Gastrocnemius medialis (tissue), 4 donors: ENCODE measurements at regions of chr7 and their contacts with region 1.

Region 1: GRCh38 chr7:105336009-105336408 is 52.7 kb downstream of the SRPK2 start:
- DNase-seq: no peak
- ATAC-seq: no peak
- H3K4me3 ChIP-seq: no peak overlapping the region
- H3K27ac ChIP-seq: no peak overlapping the region
- H3K4me1 ChIP-seq: peaks cover 0 to 10% of the 10 kb centered on the region in 2 donors
- H3K27me3 ChIP-seq: no peaks in the 10 kb centered on the region
- CTCF ChIP-seq: peak in 3 of 5 experiments; percentile 23 to 47 (median 25)
- POLR2A ChIP-seq: no peak

Region 2: GRCh38 chr7:105131033-105131656 is 204.9 kb before region 1 on chr7:
- in situ Hi-C with region 1: no loop called
- intact Hi-C with region 1: loop called (anchors 5 kb)
- DNase-seq: no peak
- ATAC-seq: no peak
- H3K4me3 ChIP-seq: no peak overlapping the region
- H3K27ac ChIP-seq: no peak overlapping the region
- H3K4me1 ChIP-seq: peaks cover 13% of the 10 kb centered on the region in 2 donors
- H3K27me3 ChIP-seq: no peaks in the 10 kb centered on the region
- CTCF ChIP-seq: no peak
- POLR2A ChIP-seq: no peak

Region 3: DNA sequence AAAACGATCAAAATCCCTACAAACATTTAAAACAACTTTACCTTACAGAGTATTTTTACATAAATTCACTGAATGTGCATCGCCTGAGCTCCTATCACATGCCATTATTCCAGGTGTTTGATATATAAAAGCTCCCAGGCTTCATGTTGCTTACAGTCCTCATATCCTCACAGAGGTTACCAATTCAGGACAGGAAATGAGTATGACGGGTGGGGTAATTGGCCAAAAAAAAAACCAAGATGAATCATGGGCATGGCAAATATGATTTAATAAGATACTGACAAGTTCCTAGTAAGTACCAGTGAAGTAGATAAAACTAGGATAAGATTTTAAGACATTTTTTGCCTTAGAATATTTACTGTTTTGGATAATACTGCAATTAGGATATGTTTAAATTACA is 186.2 kb before region 1 on chr7:
- in situ Hi-C with region 1: no loop called
- intact Hi-C with region 1: loop called (anchors 10 kb)
- DNase-seq: no peak
- ATAC-seq: no peak
- H3K4me3 ChIP-seq: no peak overlapping the region
- H3K27ac ChIP-seq: no peak overlapping the region
- H3K4me1 ChIP-seq: peaks cover 0 to 7% of the 10 kb centered on the region in 2 donors
- H3K27me3 ChIP-seq: no peaks in the 10 kb centered on the region
- CTCF ChIP-seq: no peak
- POLR2A ChIP-seq: no peak